BJ (cell line): ENCODE measurements at regions of chr5 and their contacts with region 1.

Region 1: GRCh38 chr5:64634997-64635686 is 55.2 kb upstream of the SHISAL2B start:
- DNase-seq: no peak
- H3K4me3 ChIP-seq: no peak overlapping the region
- H3K27me3 ChIP-seq: 0 out of 2 replicates have a peak, but pooled peaks cover 5% of the 10 kb centered on the region
- CTCF ChIP-seq: peak; percentile 50

Region 2: GRCh38 chr5:64666078-64666477 is 30.9 kb after region 1 on chr5:
- CTCF ChIA-PET with region 1: no interaction called
- POLR2A ChIA-PET with region 1: no interaction called
- DNase-seq: no peak
- H3K4me3 ChIP-seq: no peak overlapping the region
- H3K27me3 ChIP-seq: no peaks in the 10 kb centered on the region
- CTCF ChIP-seq: no peak

Region 3: GRCh38 chr5:64768358-64769312 is 133.5 kb after region 1 on chr5 and contains the starts of genes CWC27 and SREK1IP1:
- CTCF ChIA-PET with region 1: interaction called, 18 read pairs
- POLR2A ChIA-PET with region 1: interaction called, 4 read pairs
- DNase-seq: peak; percentile 47
- H3K4me3 ChIP-seq: peak within 1 kb of the TSS; percentile 66
- H3K27me3 ChIP-seq: no peaks in the 10 kb centered on the region
- CTCF ChIP-seq: peak; percentile 42
- polyA plus RNA-seq, gene CWC27: 7.5 and 17.8 TPM in 2 replicates
- polyA plus RNA-seq, gene SREK1IP1: 2.8 and 4.0 TPM in 2 replicates

Region 4: DNA sequence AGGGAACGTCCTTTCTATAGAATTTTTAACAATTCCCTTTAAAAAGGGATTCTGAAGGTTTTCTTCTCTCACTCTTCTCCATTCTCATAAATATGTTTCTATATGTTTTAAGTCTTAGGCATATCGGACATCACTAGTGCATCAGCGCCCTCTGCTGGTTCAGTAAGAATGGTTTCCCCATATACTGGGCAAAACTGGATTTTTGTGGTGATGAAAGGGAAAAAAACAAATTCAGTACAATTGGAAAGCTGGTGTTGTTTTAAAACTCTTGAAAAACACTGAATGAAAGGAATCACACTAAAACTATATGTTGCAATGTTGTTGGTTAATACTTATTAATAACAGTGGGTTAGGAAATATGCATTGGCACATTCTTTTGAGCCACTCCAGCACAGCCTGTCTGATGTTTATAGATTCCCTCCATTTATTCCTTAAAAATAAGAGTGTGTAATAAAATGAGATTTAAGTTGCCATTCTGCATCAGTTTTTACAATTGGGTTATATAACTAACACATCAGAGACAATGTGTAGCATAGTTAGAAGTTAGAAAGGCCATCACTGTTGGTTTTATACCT is 149.4 kb after region 1 on chr5:
- CTCF ChIA-PET with region 1: interaction called, 16 read pairs
- POLR2A ChIA-PET with region 1: no interaction called
- DNase-seq: no peak
- H3K4me3 ChIP-seq: no peak overlapping the region
- H3K27me3 ChIP-seq: no peaks in the 10 kb centered on the region
- CTCF ChIP-seq: peak; percentile 76